Activated CD8-positive, alpha-beta T cell treated with anti-CD3 and anti-CD28 coated beads for 36 hours (primary cell): ENCODE measurements at regions of chr2 and their contacts with region 1.

Region 1: GRCh38 chr2:230824406-230824978 is 40.2 kb upstream of the ITM2C start:
- DNase-seq: peak; percentile 65
- ATAC-seq: peak; percentile 81
- H3K4me3 Mint-ChIP-seq: no peak overlapping the region
- H3K27ac Mint-ChIP-seq: no peak overlapping the region
- H3K4me1 Mint-ChIP-seq: peaks cover 7% of the 10 kb centered on the region
- H3K27me3 Mint-ChIP-seq: peaks cover 30% of the 10 kb centered on the region
- CTCF ChIP-seq: peak; percentile 69

Region 2: GRCh38 chr2:230582851-230583283 is 241.6 kb before region 1 on chr2:
- CTCF ChIA-PET with region 1: no interaction called
- POLR2A ChIA-PET with region 1: no interaction called
- intact Hi-C with region 1: no loop called
- DNase-seq: peak; percentile 31
- ATAC-seq: peak; percentile 82
- H3K4me3 Mint-ChIP-seq: no peak overlapping the region
- H3K27ac Mint-ChIP-seq: peak overlapping the region; percentile 26
- H3K4me1 Mint-ChIP-seq: peaks cover 16% of the 10 kb centered on the region
- H3K27me3 Mint-ChIP-seq: no peaks in the 10 kb centered on the region
- CTCF ChIP-seq: no peak

Region 3: GRCh38 chr2:230809677-230810251 is 14.7 kb before region 1 on chr2:
- CTCF ChIA-PET with region 1: interaction called, 22 read pairs
- POLR2A ChIA-PET with region 1: interaction called, 4 read pairs
- intact Hi-C with region 1: no loop called
- DNase-seq: no peak
- ATAC-seq: no peak
- H3K4me3 Mint-ChIP-seq: no peak overlapping the region
- H3K27ac Mint-ChIP-seq: no peak overlapping the region
- H3K4me1 Mint-ChIP-seq: peaks cover 17% of the 10 kb centered on the region
- H3K27me3 Mint-ChIP-seq: no peaks in the 10 kb centered on the region
- CTCF ChIP-seq: peak; percentile 24

Region 4: DNA sequence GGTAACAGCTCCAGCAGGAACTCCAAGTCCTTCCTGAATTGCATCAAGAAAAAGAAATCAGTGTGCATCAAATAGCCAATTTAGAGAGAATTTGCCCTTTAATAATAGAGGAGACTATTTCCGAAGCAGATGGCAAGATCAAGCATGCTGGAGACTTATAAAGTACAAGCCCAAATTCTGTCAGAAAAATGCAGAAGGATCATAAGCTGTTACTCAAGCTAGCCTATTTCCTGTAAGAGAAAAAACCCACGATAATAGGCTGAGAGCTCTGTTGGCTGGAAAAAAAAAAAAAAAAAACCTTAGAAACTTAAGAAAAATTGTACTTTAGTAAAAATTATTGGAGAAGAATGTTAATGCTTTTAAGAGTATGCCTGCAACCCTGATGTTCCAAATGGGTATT is 15.8 kb after region 1 on chr2:
- CTCF ChIA-PET with region 1: interaction called, 34 read pairs
- POLR2A ChIA-PET with region 1: no interaction called
- intact Hi-C with region 1: no loop called
- DNase-seq: no peak
- ATAC-seq: no peak
- H3K4me3 Mint-ChIP-seq: no peak overlapping the region
- H3K27ac Mint-ChIP-seq: no peak overlapping the region
- H3K4me1 Mint-ChIP-seq: peaks cover 4% of the 10 kb centered on the region
- H3K27me3 Mint-ChIP-seq: peaks cover 3% of the 10 kb centered on the region
- CTCF ChIP-seq: no peak

Region 5: GRCh38 chr2:230847883-230848388 is 23.4 kb after region 1 on chr2:
- CTCF ChIA-PET with region 1: interaction called, 49 read pairs
- POLR2A ChIA-PET with region 1: no interaction called
- intact Hi-C with region 1: no loop called
- DNase-seq: peak; percentile 97
- ATAC-seq: peak; percentile 97
- H3K4me3 Mint-ChIP-seq: no peak overlapping the region
- H3K27ac Mint-ChIP-seq: no peak overlapping the region
- H3K4me1 Mint-ChIP-seq: peaks cover 10% of the 10 kb centered on the region
- H3K27me3 Mint-ChIP-seq: peaks cover 21% of the 10 kb centered on the region
- CTCF ChIP-seq: peak; percentile 96

Region 6: DNA sequence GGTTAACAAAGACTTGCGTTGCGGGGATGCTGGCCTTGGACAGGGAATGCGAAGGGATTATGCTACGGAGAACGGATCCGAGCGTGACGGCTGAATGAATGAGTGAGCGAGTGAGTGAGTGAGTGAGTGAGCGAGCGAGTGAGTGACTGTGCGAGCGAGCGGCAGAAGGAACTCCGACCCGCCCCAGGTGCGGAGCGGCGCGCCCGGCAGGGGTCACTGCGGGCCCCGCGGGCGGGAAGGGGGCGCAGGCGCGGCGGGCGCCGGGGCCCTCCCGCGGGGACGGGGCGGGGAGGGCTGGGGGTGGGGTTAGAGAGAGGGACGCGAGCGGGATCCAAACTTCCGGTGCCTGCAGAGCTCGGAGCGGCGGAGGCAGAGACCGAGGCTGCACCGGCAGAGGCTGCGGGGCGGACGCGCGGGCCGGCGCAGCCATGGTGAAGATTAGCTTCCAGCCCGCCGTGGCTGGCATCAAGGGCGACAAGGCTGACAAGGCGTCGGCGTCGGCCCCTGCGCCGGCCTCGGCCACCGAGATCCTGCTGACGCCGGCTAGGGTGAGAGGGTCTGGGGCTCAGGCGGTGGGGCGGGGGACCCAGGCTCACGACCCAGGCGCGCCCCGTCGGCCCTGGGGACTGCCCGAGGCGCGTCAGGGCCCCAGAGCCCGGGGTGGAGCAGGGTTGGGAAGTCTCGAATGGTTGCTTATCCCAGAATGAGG is 40.3 kb after region 1 on chr2 and contains the start of gene ITM2C:
- CTCF ChIA-PET with region 1: interaction called, 15 read pairs
- POLR2A ChIA-PET with region 1: no interaction called
- intact Hi-C with region 1: no loop called
- DNase-seq: peak; percentile 82
- ATAC-seq: peak; percentile 85
- H3K4me3 Mint-ChIP-seq: peak within 1 kb of the TSS; percentile 73
- H3K27ac Mint-ChIP-seq: peak within 1 kb of the TSS; percentile 55
- H3K4me1 Mint-ChIP-seq: peaks cover 50% of the 10 kb centered on the region
- H3K27me3 Mint-ChIP-seq: peaks cover 2% of the 10 kb centered on the region
- CTCF ChIP-seq: peak; percentile 13
- total RNA-seq, gene ITM2C: 43.2 to 43.4 TPM

Region 7: DNA sequence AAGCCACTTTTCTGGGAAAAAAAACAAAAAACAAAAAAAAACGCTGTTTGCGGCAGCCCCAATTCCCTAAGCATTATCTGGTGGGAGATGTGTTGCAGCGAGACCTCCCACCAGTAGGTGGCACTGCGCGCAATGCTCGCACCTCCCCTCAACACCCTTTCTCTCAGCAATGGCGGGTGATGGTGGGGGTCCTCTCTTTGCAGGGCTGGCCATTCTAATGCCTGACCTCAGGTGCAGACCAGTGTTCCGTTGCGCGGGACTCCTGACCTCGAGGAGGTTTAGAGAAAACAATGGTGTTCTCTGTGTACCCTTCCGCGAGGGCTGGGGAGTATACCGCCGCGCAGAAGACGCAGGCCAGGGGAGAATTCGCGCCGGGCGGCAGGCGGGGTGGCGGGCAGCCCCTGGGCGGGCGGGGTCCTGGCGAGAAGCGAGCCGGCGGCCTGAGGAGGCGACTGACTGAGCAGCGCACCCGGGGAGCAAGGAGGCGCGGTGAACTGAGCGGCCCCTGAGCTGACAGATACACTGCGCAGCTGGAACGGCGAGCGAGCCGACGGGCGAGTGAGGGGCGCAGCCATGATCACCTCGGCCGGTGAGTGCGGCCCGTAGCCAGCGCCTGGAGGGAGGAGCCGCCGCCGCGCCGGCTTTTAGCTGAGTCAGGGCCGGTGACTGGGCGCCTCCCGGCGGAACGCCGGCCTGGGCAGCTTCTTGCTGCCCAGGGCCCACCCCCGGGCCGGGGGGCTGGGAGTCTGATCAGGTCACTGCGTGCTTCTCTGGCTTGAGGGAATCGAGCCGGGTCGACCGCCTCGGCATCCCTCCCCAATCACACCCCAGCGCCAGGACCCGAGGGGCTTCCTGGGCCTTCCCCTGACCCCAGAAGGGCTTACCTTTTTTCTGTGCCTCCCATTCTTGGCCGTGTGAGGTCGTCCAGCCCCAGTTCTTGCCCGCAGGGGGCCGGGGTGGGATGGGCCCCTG is 232.2 kb after region 1 on chr2 and contains the start of gene PSMD1:
- CTCF ChIA-PET with region 1: interaction called, 22 read pairs
- POLR2A ChIA-PET with region 1: interaction called, 4 read pairs
- intact Hi-C with region 1: loop called (anchors 10 kb)
- DNase-seq: peak; percentile 96
- ATAC-seq: peak; percentile 86
- H3K4me3 Mint-ChIP-seq: peak within 1 kb of the TSS; percentile 81
- H3K27ac Mint-ChIP-seq: peak within 1 kb of the TSS; percentile 100
- H3K4me1 Mint-ChIP-seq: peaks cover 48% of the 10 kb centered on the region
- H3K27me3 Mint-ChIP-seq: peaks cover 4% of the 10 kb centered on the region
- CTCF ChIP-seq: peak; percentile 93
- total RNA-seq, gene PSMD1: 106 to 114 TPM